ENCODE measurements at regions of chr4 and their contacts with region 1.

Region 1: DNA sequence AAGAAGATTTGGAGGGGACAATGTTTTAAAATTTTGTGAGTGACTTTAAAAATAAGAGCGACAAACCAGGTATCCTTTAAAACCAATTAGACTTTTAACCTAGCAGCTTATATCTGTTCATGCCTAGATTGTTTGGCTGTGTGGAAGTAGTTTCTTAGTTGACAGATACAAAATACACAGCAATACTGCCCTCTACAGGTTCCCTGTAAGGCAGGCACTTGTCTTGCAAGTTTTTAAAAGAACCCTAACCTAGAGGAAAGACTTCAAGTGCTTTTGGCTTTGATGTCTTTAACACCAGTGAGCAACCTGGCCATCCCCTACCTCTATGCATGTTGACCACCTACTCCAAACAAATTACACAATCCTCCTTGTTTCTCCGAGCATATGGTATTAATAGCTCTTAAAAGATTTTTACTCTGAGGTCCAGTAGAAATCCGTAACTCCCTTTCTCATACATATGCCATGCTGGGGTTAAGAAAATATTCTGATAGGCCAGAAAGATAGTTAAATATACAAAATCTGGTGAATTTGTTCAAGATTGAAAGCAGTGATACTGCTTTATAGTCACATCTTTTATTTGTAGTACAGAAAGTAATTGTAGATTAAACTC is 273.0 kb downstream of the ARHGAP24 start:
- DNase-seq: peak in 3 of 10 donors; percentile 24 to 71 (median 26)
- H3K4me3 ChIP-seq: no peak overlapping the region
- H3K27ac ChIP-seq: peak overlapping the region in 7 of 59 donors; percentile 5 to 46 (median 33)
- H3K27me3 ChIP-seq: no peaks in the 10 kb centered on the region
- CTCF ChIP-seq: peak; percentile 62 to 96 (median 90)

Region 2: DNA sequence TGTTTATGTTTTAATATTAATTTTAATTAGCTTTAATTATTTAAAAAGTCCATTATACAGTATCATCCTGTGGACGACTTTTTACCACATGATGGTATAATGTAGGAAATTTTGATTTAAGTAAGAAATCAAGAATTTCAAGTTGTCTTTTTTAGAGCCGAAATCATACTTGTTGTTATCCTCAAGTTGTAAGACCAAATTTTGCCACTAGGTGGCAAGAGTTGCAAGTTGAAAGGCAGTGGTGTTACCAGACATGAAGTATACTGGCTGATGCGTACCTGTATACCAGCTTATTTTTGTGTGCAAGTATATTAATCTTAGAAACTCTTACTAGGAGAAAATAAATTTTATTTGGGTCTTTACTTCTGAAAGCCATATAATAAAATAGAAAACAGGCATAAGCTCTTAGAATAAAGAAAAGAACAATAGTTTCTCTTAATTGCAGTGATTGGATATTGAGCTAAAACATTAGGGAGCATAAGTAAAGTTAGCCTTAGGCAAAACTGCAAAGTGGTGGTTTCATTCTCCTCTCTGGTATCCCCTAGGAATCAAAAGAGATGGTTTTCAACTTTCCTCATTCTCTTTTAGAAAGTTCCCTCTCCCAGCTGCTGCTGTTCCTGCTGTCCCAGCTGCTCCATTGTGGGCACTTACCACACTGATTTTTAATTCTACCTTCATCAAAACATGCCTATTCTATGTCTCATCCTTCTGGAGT is 663.5 kb before region 1 on chr4:
- intact Hi-C with region 1: loop called in 1 of 2 experiments (anchors 10 kb)
- DNase-seq: peak in 2 of 10 donors; percentile 8 to 51
- H3K4me3 ChIP-seq: no peak overlapping the region
- H3K27ac ChIP-seq: no peak overlapping the region
- H3K27me3 ChIP-seq: no peaks in the 10 kb centered on the region
- CTCF ChIP-seq: peak; percentile 65 to 88 (median 77)

Region 3: GRCh38 chr4:85370430-85371032 is 377.5 kb before region 1 on chr4:
- intact Hi-C with region 1: loop called in 1 of 2 experiments (anchors 5 kb)
- DNase-seq: peak in 4 of 10 donors; percentile 27 to 38 (median 30)
- H3K4me3 ChIP-seq: no peak overlapping the region
- H3K27ac ChIP-seq: peak overlapping the region in 1 of 59 donors; percentile 49
- H3K27me3 ChIP-seq: no peaks in the 10 kb centered on the region
- CTCF ChIP-seq: peak in 54 of 56 donors; percentile 16 to 73 (median 59)

Measured in dorsolateral prefrontal cortex (tissue), 120 donors.